Activated CD4-positive, alpha-beta T cell treated with anti-CD3 and anti-CD28 coated beads, Interleukin-2, amount 10 ng/mL, durations not matched to agents 24 days and 14 days (primary cell): ENCODE measurements at regions of chrX and their contacts with region 1.

Region 1: GRCh38 chrX:124395145-124395880 is 49.0 kb downstream of the SH2D1A start:
- DNase-seq: peak; percentile 55
- H3K4me3 Mint-ChIP-seq: peak overlapping the region; percentile 48
- H3K27ac Mint-ChIP-seq: peak overlapping the region; percentile 32
- H3K4me1 Mint-ChIP-seq: peaks cover 22% of the 10 kb centered on the region
- H3K27me3 Mint-ChIP-seq: no peaks in the 10 kb centered on the region

Region 2: DNA sequence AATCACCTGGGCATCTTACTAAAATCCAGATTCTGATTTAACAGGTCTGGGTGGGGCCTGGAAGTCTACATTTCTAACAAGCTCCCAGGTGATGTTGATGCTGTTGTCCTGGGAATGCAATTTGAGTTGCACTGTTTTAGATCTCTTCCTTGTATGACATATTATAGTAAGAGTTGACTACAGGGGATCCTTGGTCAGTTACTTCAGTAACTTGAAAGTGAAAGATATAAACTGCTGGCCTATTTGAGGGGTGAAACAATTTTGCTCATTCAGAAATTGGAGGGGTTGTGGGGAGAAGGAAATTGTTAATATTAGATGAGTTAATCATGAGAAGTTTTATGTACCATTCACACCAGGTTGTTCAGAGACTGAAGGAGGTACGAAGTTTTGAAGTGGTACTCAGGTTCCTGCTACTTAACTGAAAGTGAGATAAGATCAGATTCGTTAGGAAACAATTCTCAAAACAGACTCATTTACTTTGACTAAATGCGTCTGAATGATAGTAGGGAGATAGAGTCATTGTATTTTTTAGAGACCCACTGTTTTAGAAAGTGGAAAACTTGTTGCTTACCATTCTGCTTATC is 36.4 kb before region 1 on chrX:
- intact Hi-C with region 1: loop called (anchors 5 kb)
- DNase-seq: peak; percentile 60
- H3K4me3 Mint-ChIP-seq: peak overlapping the region; percentile 73
- H3K27ac Mint-ChIP-seq: peak overlapping the region; percentile 82
- H3K4me1 Mint-ChIP-seq: peaks cover 48% of the 10 kb centered on the region
- H3K27me3 Mint-ChIP-seq: no peaks in the 10 kb centered on the region

Region 3: DNA sequence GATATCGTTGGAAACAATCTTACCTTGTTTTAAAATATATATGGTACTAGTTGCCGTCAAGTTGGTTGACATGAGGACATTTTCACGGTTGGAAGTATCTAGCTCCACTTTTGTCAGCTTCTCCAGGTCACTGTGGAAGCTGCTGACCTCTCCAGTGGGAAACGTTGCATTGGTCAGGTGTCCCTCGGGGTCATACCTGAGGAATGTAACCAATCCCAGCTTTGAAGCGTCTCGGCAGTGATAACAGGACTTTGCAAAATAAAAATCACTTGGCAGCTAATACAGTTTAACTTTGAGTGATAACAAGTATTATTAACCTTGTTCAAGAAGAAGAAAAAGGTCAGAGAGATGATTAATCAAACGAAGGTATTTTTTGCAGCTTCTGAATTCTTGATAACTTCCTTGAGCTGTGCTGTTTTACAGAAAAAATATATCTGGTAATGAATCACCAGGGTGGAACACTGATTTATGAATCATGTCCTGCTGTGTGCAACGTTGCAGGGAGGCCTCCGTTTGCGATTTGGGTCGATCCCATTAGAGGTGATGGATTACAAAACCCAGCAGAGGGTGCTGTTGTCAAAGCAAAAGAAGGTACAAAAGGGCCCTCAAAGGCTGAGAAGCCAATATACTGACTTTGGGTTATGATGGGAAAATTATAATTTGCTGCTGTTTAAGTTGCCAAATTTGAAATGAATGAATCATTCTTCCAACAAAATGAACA is 11.1 kb after region 1 on chrX:
- intact Hi-C with region 1: loop called (anchors 1 kb)
- DNase-seq: peak; percentile 86
- H3K4me3 Mint-ChIP-seq: no peak overlapping the region
- H3K27ac Mint-ChIP-seq: no peak overlapping the region
- H3K4me1 Mint-ChIP-seq: peaks cover 3% of the 10 kb centered on the region
- H3K27me3 Mint-ChIP-seq: no peaks in the 10 kb centered on the region

Region 4: DNA sequence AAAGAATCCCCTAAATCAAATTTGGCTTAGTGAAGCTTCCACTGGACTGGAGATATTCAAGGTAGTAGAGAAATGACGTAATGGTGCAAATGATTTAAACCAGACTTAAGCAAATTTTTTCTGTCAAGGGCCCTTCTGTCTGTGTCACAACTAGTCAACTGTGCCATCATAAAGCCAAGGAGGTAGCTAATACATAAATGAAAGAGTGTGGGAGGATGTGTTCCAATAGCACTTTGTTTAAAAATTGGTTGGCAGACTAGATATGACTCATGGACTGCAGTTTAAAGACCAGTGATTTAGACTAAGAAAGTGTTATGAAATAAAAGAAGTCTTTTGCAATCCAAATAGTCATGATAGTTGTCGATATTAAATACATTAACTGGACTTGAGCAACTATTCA is 900.0 kb after region 1 on chrX:
- intact Hi-C with region 1: loop called (anchors 10 kb)
- DNase-seq: no peak
- H3K4me3 Mint-ChIP-seq: peak overlapping the region; percentile 34
- H3K27ac Mint-ChIP-seq: peak overlapping the region; percentile 80
- H3K4me1 Mint-ChIP-seq: peaks cover 15% of the 10 kb centered on the region
- H3K27me3 Mint-ChIP-seq: no peaks in the 10 kb centered on the region